ENCODE measurements at regions of chr5 and their contacts with region 1.

Region 1: GRCh38 chr5:172770675-172771438 is at the start of gene DUSP1:
- H3K4me3 ChIP-seq: peak within 1 kb of the TSS; percentile 89
- H3K27ac ChIP-seq: peak within 1 kb of the TSS; percentile 95
- H3K4me1 ChIP-seq: peaks cover 19% of the 10 kb centered on the region; the same call in 1 of the 2 replicates
- CTCF ChIP-seq: peak; percentile 99

Region 2: DNA sequence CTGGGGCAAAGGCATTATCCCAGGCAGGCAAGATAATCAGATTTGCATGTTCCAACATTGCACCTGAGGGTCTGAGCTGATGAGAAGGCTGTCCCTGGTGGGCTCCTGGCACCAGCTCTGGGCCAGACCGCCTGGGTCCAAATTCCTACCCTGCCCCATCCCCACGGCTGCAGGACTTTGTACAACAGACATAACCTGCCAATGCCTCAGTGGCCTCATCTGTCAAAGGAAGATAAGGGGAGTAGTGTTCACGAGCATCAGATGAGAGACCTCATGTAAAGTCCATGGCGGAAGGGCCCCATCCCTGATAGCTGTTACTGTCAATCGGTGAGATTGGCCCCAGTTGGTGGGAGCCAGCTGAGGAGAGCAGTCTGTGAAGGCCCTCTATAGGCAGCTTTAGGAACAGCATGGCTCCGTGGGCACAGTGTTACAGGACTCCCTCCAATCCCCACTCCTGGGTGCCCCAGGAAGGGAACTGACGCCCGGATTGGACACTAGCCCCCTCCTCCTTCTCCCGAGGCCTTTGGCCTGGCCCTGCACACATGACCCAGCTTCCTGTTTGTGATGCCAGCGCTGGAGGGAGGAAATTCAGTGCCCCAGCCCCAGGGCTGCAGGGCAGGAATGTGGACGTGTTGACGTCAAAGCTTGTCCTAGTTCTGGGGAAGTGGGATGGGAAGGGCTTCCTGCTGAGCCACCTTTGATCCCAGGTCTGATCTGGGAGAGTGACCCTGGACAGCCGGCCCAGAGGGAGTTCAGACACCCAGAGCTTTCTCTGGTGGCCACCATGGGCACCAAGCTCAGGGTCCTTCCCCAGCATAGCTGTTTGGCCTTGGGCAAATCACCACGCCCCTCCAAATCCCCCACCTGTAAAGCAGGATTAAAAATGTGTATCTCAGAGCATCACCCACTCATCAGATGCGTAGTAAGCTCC is 56.1 kb before region 1 on chr5:
- CTCF ChIA-PET with region 1: interaction called, 45 read pairs
- POLR2A ChIA-PET with region 1: interaction called, 45 read pairs
- H3K4me3 ChIP-seq: no peak overlapping the region
- H3K27ac ChIP-seq: no peak overlapping the region
- H3K4me1 ChIP-seq: no peaks in the 10 kb centered on the region
- CTCF ChIP-seq: peak; percentile 68; the same call in 1 of the 2 replicates

Region 3: DNA sequence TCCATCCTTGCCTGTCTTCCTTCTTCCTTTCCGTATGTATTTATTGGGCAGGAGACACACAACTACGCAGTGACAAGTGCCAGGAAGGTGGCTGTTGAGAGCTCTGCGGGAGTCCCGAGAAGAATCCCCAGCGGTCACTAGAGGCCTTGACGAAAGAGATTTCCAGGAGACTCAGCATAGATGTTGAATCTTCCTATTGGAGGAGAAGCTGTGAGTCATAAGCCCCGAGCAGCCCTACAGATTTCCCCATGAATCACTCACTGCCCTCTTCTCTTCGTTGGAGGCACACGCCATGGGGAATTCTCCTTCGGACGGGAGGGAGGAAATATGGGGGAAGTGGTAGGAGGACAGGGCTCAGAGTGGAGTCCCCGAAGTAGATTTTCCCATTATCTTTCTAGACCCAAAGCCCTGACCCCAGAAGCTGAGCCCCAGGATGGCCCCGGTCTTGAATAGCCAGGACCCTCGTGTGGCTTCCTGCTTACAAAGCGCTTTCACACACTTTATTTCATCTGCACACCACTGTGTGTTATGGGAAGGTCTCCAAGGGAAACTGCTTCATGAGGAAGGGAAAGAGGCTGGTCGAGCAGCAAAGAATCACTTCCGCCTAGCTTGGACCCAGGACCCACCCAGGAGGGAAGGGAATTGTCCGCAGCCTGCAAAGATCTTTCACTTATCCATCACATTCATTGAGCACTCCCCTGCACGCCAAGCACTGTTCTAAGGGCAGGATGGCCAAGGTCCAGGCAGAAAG is 12.6 kb before region 1 on chr5:
- CTCF ChIA-PET with region 1: interaction called, 7 read pairs
- POLR2A ChIA-PET with region 1: interaction called, 16 read pairs
- H3K4me3 ChIP-seq: no peak overlapping the region
- H3K27ac ChIP-seq: no peak overlapping the region
- H3K4me1 ChIP-seq: no peaks in the 10 kb centered on the region
- CTCF ChIP-seq: no peak

Region 4: DNA sequence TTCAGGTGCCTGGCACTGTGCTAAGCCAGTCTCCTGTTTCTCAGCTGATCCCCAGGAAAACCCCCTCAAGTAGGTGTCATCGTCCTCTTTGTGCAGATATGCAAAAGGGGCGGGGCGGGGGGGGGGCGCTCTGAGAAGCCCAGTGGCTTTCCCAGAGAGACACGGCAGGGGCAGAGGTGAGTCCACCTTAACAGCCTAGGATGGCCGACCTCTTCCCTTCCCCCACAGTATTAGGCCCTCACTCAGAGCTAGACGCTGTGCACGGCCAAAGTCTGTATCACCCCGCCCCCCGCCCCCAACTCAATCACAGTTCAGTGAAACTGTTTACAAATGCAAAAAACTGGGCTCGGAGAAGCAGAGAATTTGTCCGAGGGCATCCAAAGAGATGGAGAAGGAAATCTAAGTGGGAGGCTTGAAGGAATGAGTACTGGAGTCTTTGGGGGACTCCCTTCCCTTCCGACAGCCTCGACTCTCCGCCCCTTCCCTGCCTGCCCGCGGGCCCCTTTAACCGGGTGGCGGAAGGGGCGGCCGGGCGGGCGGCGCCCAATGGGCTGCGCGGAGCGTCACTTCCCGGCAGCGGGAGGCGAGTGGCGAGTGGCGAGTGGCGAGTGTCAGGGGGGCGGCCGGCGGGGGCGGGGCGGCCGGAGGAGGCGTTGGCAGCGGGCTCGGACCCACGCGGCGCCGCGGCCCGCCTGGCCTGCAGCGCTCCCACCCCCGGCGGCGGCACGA is 63.0 kb after region 1 on chr5 and contains the start of gene ERGIC1:
- CTCF ChIA-PET with region 1: interaction called, 5 read pairs
- POLR2A ChIA-PET with region 1: interaction called, 25 read pairs
- H3K4me3 ChIP-seq: peak within 1 kb of the TSS; percentile 64
- H3K27ac ChIP-seq: peak within 1 kb of the TSS; percentile 37; the same call in 1 of the 2 replicates
- H3K4me1 ChIP-seq: peaks cover 12% of the 10 kb centered on the region
- CTCF ChIP-seq: no peak

Region 5: DNA sequence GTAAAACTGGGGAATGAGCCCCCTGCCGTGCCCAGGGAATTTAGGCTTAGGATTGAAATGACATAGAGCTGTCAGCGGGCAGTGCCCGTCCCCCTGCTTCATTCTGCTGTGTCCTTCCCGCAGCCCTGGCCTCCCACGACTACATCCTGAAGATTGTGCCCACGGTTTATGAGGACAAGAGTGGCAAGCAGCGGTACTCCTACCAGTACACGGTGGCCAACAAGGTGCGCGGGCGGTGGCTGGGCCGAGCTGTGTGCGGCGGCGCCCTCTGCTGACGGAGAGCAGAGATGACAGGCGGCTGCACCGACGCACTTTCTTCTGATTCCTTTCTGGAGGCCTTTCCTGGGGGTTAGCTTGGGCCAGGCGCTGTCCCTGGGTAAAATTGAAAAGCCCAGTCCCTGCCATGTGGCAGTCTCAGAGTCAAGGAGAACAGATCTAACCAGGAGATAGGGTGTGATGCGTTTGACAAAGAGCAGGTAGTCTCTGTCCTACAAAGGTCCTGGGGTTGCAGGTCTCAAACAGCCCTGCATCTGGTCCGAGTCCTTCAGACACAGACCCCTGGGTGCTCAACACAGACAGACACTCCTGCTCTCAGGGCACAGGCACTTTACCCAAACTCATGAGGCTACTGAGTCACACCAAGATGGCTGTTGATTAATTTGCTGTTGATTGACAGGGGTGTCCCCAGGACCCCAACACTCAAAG is 161.6 kb after region 1 on chr5:
- CTCF ChIA-PET with region 1: interaction called, 11 read pairs
- POLR2A ChIA-PET with region 1: interaction called, 26 read pairs
- H3K4me3 ChIP-seq: no peak overlapping the region
- H3K27ac ChIP-seq: no peak overlapping the region
- H3K4me1 ChIP-seq: no peaks in the 10 kb centered on the region
- CTCF ChIP-seq: peak; percentile 88

Region 6: GRCh38 chr5:173144200-173145176 is 373.6 kb after region 1 on chr5 and contains the start of gene BNIP1:
- CTCF ChIA-PET with region 1: no interaction called
- POLR2A ChIA-PET with region 1: no interaction called
- H3K4me3 ChIP-seq: peak within 1 kb of the TSS; percentile 92
- H3K27ac ChIP-seq: peak within 1 kb of the TSS; percentile 29; the same call in 1 of the 2 replicates
- H3K4me1 ChIP-seq: no peaks in the 10 kb centered on the region
- CTCF ChIP-seq: peak; percentile 94

Measured in HEK293 (cell line).